PC-9 (cell line): ENCODE measurements at regions of chr10 and their contacts with region 1.

Region 1: GRCh38 chr10:89701238-89702120 is at the start of gene KIF20B:
- DNase-seq: peak; percentile 88 to 91
- H3K4me3 ChIP-seq: peak within 1 kb of the TSS; percentile 76
- H3K27ac ChIP-seq: peak within 1 kb of the TSS; percentile 52
- H3K4me1 ChIP-seq: peaks cover 19% of the 10 kb centered on the region; the same call in 1 of the 2 replicates
- H3K27me3 ChIP-seq: no peaks in the 10 kb centered on the region
- CTCF ChIP-seq: no peak; the same call in 1 of the 2 replicates
- total RNA-seq, gene KIF20B: 14.1 and 34.5 TPM in 2 replicates

Region 2: GRCh38 chr10:89414146-89414878 is 287.2 kb before region 1 on chr10 and contains the start of gene IFIT5:
- CTCF ChIA-PET with region 1: no interaction called
- POLR2A ChIA-PET with region 1: no interaction called
- intact Hi-C with region 1: loop called (anchors 5 kb)
- DNase-seq: peak in 1 of 2 experiments; percentile 47
- H3K4me3 ChIP-seq: peak within 1 kb of the TSS; percentile 90
- H3K27ac ChIP-seq: peak within 1 kb of the TSS; percentile 83
- H3K4me1 ChIP-seq: peaks cover 8% of the 10 kb centered on the region; the same call in 1 of the 2 replicates
- H3K27me3 ChIP-seq: no peaks in the 10 kb centered on the region
- CTCF ChIP-seq: no peak
- total RNA-seq, gene IFIT5: 1.9 and 2.1 TPM in 2 replicates

Region 3: GRCh38 chr10:89426230-89426868 is 275.1 kb before region 1 on chr10:
- CTCF ChIA-PET with region 1: no interaction called
- POLR2A ChIA-PET with region 1: interaction called, 4 read pairs
- intact Hi-C with region 1: loop called (anchors 5 kb)
- DNase-seq: peak in 1 of 2 experiments; percentile 16
- H3K4me3 ChIP-seq: no peak overlapping the region
- H3K27ac ChIP-seq: no peak overlapping the region
- H3K4me1 ChIP-seq: peaks cover 9% of the 10 kb centered on the region
- H3K27me3 ChIP-seq: no peaks in the 10 kb centered on the region
- CTCF ChIP-seq: peak; percentile 78

Region 4: DNA sequence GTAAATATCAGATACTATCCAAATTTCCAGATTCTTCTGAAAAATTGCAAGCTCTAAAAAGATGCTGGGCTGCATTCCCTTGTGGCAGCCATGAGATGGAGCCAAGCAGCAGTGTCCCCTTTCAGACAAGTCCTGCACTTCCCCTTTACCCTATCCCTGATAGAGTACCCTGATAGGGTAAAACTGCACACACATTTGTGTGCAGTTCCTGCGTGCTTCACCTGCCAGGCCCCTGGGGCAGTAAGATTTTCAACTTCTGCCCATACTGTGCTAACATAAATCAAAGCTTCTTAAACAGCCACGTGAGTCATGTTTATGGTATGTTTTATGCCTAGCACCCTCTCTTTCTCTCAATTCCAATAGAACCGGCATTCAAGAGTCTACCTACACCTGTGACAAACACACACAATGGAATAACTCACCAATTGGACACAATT is 234.9 kb before region 1 on chr10:
- CTCF ChIA-PET with region 1: no interaction called
- POLR2A ChIA-PET with region 1: no interaction called
- intact Hi-C with region 1: loop called (anchors 1 kb)
- DNase-seq: peak; percentile 69 to 91
- H3K4me3 ChIP-seq: no peak overlapping the region
- H3K27ac ChIP-seq: peak overlapping the region; percentile 20; the same call in 1 of the 2 replicates
- H3K4me1 ChIP-seq: peaks cover 30% of the 10 kb centered on the region
- H3K27me3 ChIP-seq: no peaks in the 10 kb centered on the region
- CTCF ChIP-seq: peak; percentile 55

Region 5: DNA sequence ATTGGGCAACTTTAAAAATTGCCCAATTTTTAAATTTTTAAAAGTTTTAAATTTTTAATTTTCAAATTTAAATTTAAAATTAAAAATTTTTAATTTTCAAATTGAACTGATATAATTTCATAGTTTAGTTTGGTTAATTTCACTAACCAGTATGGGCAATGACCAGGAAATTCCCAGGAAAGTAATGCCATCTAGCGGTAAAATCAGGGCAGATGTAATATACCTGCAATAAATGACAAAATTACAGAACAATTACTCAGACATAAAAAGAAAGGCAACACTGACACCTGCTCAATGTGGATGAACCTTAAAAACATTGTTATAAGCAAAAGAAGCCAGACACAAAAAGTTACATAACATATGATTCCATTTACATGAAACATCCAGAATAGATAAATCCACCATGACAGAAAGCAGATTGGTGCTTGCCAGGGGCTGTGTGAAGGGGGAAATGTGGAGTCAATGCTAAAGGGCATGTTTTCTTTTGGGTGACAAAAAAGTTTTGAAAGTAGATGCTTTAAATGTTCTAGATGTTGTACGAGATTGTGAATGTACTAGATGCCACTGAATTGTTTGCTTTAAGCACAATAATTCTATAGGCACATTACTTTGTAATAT is 137.5 kb before region 1 on chr10:
- CTCF ChIA-PET with region 1: interaction called, 3 read pairs
- POLR2A ChIA-PET with region 1: no interaction called
- intact Hi-C with region 1: loop called (anchors 1 kb)
- DNase-seq: peak in 1 of 2 experiments; percentile 42
- H3K4me3 ChIP-seq: no peak overlapping the region
- H3K27ac ChIP-seq: no peak overlapping the region
- H3K4me1 ChIP-seq: no peaks in the 10 kb centered on the region
- H3K27me3 ChIP-seq: no peaks in the 10 kb centered on the region
- CTCF ChIP-seq: peak; percentile 69

Region 6: DNA sequence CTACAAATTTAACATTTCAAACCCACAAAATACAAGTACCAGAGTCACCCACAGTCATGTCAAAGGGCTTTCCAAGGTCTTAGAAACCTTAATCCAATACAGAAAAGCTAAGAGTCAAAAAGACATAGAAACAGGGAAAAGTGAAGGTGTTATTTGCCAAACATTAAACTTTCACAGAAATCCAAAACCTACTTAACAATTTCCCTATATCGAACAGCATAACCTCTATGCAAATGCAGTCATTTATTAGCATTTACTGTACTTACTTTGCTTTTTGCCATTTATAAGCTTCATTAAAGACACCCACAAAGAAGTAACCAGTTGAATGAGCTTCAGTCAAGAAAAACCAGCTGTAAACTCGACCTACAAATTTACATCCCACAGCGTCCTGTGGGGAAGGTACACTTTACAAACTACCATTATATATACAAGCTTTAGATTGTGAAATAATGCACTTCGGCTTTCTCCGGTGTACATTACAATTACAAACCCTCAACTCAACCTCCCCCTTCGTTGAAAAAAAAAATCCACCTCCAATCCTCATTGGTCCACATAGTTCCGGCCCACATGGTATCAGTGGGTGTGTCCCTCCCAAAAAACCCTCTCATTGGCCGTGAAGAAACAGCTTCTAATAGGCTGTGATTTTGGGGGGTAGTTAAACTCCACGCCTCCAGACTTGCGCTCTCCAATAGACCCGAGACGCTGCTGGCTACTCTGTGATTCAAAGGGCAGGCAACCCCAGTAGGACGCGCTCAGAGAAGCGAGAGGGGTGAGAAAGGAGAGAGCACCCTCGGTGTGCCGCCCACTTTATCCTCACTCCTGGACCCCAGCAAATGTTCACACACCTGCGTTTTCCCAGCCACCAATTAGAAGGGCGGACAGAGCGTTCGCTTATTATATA is 57.8 kb before region 1 on chr10:
- CTCF ChIA-PET with region 1: interaction called, 3 read pairs
- POLR2A ChIA-PET with region 1: interaction called, 8 read pairs
- intact Hi-C with region 1: loop called (anchors 1 kb)
- DNase-seq: peak; percentile 77 to 96
- H3K4me3 ChIP-seq: peak overlapping the region; percentile 83
- H3K27ac ChIP-seq: peak overlapping the region; percentile 56
- H3K4me1 ChIP-seq: peaks cover 25% of the 10 kb centered on the region; the same call in 1 of the 2 replicates
- H3K27me3 ChIP-seq: no peaks in the 10 kb centered on the region
- CTCF ChIP-seq: no peak